Activated naive CD8-positive, alpha-beta T cell treated with anti-CD3 and anti-CD28 coated beads, Interleukin-2, amount 10 ng/mL, durations not matched to agents 7 days and 5 days (primary cell): ENCODE measurements at regions of chr15 and their contacts with region 1.

Region 1: DNA sequence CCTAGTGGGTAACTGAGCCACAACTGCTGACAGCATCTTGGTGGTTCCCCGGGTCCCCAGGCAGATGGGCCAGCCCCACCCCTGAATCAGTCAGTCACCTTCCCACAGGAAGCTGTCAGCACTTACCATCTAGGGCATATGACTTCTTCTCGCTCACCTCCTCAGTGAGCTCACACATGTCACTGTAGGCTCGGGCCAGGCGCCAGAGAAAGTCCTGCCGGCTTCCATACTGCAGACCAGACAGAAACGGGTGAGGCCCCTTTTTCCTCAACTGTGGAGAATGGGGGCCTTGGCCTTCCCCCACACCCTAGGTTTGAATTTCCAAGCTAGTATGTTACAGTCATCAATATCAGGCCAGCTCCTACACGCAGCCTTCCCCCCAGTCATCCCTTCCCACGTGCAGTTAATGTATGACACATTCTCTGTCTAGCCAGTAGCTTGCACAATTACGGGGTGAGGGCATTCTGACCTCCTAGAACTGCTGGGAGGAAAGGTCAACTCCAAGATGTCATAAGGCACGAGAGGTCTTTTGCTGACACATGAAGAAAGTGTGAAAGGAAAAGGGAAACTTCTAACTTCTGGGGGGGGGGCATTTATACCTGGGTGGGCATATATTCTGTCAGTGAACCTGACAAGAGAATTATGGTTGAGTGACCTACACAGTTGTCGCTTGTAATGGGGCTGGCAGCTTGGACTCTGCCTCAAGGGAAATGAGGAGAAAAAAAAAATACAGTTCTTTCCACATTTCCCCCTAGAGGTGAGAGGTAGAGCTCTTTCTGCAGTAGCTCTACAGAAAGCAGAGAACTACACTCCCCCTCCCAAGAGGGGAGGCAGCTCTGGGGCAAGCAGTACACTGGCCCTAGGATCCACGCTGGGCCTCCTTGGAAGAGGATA is 10.9 kb downstream of the RMDN3 start:
- DNase-seq: peak; percentile 66
- ATAC-seq: peak; percentile 97
- H3K4me3 Mint-ChIP-seq: peak overlapping the region; percentile 66
- H3K27ac Mint-ChIP-seq: peak overlapping the region; percentile 92
- H3K4me1 Mint-ChIP-seq: peaks cover 42% of the 10 kb centered on the region
- H3K27me3 Mint-ChIP-seq: no peaks in the 10 kb centered on the region

Region 2: DNA sequence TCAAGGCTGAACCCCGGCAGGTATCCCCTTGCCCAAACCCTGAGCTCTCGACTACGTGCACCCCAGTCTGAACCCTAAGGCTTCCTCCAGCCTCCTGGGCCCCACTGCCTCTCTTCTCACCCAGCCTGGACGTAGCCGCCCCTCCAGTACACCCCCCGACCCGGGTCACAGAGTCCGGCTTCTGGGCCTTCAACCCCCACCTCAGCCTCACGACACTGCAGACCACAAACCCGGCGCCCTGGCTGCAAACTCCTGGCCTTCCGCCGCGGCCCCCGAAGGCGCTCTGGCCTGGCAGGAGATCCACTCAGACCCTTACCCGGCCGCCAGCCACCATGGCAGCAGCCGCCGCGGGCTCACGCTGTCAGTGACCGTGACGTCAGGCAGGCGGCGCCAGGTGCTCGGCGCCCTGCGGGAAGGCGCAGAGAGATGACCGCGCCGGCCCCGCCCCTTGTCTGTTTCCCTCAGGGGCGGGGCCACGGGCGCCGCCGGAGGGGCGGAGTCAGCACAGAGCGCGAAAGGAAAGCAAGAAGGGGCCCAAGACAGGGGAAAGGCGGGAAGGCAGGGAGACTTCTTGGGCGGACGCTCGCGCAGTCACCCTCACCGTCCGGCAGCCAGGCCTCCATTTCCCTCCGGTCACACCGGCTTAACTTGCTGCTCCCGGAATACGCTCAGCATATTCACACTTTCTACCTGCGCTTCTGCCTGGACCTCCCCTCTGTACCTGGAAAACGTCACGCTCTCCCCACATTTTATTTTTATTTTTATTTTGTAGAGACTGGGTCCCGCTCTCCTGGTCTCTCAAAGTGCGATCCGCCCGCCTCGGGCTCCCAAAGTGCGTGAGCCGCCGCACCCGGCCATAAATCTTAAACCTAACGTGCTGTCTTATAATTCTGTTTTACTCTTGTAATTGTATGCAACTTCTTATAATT is 11.0 kb after region 1 on chr15 and contains the start of gene RMDN3:
- POLR2A ChIA-PET with region 1: interaction called, 10 read pairs
- DNase-seq: peak; percentile 99
- ATAC-seq: peak; percentile 83
- H3K4me3 Mint-ChIP-seq: peak within 1 kb of the TSS; percentile 82
- H3K27ac Mint-ChIP-seq: peak within 1 kb of the TSS; percentile 98
- H3K4me1 Mint-ChIP-seq: peaks cover 35% of the 10 kb centered on the region
- H3K27me3 Mint-ChIP-seq: peaks cover 5% of the 10 kb centered on the region
- total RNA-seq, gene RMDN3: 32.5 to 36.4 TPM

Region 3: DNA sequence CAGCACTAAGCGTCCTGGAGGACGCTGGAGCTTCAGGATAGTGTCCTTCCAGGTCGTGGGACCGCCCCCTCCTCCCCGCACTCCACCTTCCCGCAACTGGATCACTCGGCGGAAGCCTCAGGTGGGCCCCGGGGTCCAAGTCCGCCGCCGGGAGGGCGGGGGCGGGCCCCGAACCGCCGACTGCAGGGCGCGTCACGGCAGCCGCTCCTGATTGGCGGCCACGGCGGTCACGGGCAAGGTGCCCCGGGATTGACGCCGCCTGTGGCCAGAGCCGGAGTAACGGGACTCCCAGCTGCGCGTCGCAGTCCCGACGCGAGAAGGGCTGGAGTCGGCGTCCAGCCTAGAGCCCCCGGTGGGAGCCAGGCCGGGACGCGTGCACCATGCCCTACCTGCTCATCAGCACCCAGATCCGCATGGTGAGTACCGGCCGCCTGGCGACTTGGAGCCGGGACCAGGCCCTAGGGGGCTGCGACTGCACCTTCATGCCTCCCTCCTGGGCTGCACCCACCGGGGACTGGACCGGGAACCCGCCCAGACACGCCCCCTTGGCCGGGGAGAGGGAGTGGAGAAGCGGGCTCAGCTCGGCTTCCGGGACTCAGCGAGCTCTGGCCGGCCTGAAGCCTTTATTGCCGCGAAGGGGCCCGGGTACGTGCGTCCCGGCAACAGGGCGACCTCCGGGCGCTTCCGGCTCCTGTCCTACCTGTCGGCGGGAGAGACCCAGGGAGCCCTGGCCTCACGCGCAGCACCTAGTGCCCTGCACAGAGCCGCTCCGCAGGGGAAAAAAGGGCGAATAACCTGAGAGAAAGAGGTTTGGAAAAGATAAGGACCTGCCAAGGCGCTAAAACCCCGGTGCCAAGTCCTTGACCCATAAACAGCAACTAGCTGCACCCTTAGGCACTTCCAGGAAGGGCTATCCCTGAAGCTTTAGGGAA is 19.9 kb after region 1 on chr15 and contains the start of gene GCHFR:
- POLR2A ChIA-PET with region 1: interaction called, 21 read pairs
- DNase-seq: peak; percentile 85
- ATAC-seq: peak; percentile 56
- H3K4me3 Mint-ChIP-seq: peak within 1 kb of the TSS; percentile 82
- H3K27ac Mint-ChIP-seq: peak within 1 kb of the TSS; percentile 89
- H3K4me1 Mint-ChIP-seq: peaks cover 20% of the 10 kb centered on the region
- H3K27me3 Mint-ChIP-seq: peaks cover 5% of the 10 kb centered on the region
- total RNA-seq, gene GCHFR: 58.2 to 61.5 TPM